CD4-positive, alpha-beta T cell (primary cell): ENCODE measurements at regions of chr12 and their contacts with region 1.

Region 1: DNA sequence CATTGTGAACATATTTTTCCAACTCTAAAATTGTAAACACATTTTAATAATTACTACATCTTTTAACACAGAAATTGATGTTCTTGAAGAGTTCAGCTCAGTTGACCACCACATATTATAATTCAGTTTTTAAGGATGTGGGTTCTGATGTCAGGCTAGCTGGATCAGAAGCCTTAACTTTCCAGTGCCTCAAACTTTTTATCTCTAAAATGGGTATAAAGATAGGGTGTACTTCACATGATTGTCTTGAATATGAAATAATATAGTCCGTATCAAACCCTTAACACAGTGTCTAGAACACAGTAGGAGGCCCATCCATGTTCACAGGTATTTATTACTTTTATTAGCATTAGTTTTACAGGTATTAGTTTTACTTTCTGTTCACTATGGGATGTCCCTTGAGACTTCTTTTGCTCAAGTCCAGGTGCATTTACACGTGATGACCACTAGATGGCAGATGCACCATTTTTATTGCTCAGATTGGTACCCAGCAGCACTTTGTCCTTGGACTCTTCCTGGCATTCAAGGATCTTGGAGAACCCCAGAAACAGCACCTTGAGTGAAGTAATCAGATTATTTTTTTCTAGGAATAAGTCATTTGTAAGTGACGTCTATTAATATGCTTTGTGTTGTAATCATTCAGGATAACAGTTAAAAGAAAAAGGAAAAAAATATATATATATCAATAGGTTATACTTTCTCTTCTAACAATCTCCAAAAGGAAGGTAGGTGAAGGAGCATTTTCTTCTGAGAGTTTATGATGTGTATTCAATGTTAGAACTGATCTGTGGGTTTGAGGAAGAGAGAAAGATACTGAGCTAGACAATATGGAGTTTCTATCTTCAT is 580.2 kb downstream of the ETNK1 start:
- DNase-seq: peak in 4 of 14 experiments; percentile 5 to 59 (median 51)
- ATAC-seq: no peak
- H3K4me3 ChIP-seq: no peak overlapping the region
- H3K4me3 Mint-ChIP-seq: no peak overlapping the region
- H3K27ac ChIP-seq: no peak overlapping the region
- H3K27ac Mint-ChIP-seq: no peak overlapping the region
- H3K4me1 ChIP-seq: no peaks in the 10 kb centered on the region
- H3K4me1 Mint-ChIP-seq: no peaks in the 10 kb centered on the region
- H3K27me3 ChIP-seq: no peaks in the 10 kb centered on the region
- H3K27me3 Mint-ChIP-seq: no peaks in the 10 kb centered on the region
- CTCF ChIP-seq: peak; percentile 96

Region 2: DNA sequence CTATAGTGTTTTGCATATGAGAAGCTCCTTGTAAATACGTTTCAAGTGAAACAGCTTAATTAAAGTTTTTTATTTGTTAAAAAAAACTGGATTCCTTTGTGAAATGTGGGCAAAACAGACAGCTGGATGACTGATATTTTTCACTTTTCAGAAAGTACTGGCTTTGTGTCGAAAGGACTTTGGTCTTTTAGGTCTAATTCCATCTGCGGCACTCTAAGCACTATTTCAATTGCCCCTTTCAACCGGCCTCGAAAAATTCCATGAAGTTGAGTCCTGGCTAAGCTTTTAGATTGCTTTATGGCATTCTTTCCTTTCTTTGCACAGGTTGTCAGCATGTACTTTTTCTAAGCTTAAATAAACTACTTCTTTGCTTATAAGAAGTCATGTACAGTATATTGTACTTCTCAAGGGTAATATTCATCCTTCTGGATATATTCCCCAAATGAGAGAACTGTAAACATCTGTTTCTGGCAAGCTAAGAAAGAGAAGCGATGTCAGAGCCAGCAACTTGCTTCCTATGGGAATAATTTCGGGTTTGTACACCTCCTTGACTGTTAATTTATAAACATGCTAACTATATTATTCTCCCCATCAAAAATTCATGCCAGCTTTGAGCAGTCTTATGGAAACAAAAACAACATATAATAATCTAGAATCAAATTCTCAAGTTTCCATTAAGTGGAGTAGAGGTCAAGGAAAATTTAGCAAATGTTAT is 31.1 kb after region 1 on chr12:
- CTCF ChIA-PET with region 1: no interaction called
- POLR2A ChIA-PET with region 1: no interaction called
- intact Hi-C with region 1: no loop called
- DNase-seq: no peak
- ATAC-seq: no peak
- H3K4me3 ChIP-seq: no peak overlapping the region
- H3K4me3 Mint-ChIP-seq: no peak overlapping the region
- H3K27ac ChIP-seq: no peak overlapping the region
- H3K27ac Mint-ChIP-seq: no peak overlapping the region
- H3K4me1 ChIP-seq: no peaks in the 10 kb centered on the region
- H3K4me1 Mint-ChIP-seq: no peaks in the 10 kb centered on the region
- H3K27me3 ChIP-seq: no peaks in the 10 kb centered on the region
- H3K27me3 Mint-ChIP-seq: no peaks in the 10 kb centered on the region
- CTCF ChIP-seq: no peak

Region 3: DNA sequence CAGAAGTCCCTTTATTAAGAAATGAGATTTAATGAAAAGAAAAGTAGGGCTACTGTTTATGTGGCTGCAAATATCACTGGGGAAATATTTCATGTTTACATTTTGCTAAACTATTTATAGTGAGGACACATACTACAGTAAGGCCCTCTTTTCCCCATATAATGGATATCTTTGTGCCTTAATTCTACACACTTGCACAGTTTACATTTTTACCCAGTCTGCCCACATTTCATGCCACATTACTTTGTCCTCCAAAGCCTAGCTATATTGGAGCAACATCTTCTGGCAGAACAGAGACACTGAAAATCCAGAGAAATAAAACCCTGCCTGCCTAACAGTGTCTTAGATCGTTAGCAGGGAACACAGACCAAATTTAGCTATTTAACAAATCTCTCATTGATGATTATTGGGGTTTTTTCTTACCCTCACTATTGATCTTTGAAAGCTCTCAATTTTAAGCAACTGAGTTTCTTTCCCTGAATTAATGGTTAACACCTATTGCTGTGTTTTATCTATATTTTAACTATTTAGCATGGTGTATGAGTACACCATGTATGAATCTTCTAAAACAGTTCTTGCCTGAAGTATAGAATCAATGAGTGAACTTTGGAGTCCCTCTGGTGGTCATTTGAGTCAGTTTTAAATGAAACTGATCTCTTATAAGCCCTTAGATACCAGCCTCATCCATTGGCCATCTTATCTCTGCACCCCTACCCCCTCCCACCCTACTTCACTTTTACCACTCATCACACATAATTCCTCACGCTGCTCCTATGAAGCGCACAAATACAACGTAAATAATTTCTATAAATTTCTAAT is 1573.5 kb after region 1 on chr12:
- CTCF ChIA-PET with region 1: no interaction called
- POLR2A ChIA-PET with region 1: no interaction called
- intact Hi-C with region 1: loop called in 1 of 2 experiments (anchors 2 kb)
- DNase-seq: peak in 3 of 14 experiments; percentile 14 to 24 (median 20)
- ATAC-seq: no peak
- H3K4me3 ChIP-seq: no peak overlapping the region
- H3K4me3 Mint-ChIP-seq: no peak overlapping the region
- H3K27ac ChIP-seq: no peak overlapping the region
- H3K27ac Mint-ChIP-seq: no peak overlapping the region
- H3K4me1 ChIP-seq: no peaks in the 10 kb centered on the region
- H3K4me1 Mint-ChIP-seq: no peaks in the 10 kb centered on the region
- H3K27me3 ChIP-seq: no peaks in the 10 kb centered on the region
- H3K27me3 Mint-ChIP-seq: peaks cover 10% of the 10 kb centered on the region
- CTCF ChIP-seq: no peak

Region 4: DNA sequence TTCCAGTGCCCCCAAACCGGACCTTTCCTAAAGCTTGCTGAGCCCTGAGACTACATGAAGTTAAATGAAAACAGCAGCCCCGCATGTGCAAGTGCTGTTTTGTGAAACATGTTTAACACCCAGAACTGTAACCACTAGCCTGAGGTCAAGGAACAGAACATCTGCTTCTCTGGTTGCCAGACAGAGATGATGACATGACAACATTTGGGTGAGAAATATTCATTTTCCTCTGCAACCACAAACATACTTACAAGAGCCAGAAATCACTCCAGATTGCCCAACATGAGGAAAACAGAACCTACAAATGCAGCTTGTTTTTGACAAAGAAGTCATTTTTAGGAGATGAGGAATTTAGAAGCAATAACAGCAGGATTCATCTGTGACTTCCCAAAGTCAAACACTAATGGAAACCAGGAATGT is 1633.4 kb after region 1 on chr12:
- CTCF ChIA-PET with region 1: no interaction called
- POLR2A ChIA-PET with region 1: no interaction called
- intact Hi-C with region 1: loop called (anchors 1 kb)
- DNase-seq: peak in 3 of 14 experiments; percentile 15 to 34 (median 18)
- ATAC-seq: no peak
- H3K4me3 ChIP-seq: no peak overlapping the region
- H3K4me3 Mint-ChIP-seq: no peak overlapping the region
- H3K27ac ChIP-seq: no peak overlapping the region
- H3K27ac Mint-ChIP-seq: no peak overlapping the region
- H3K4me1 ChIP-seq: no peaks in the 10 kb centered on the region
- H3K4me1 Mint-ChIP-seq: no peaks in the 10 kb centered on the region
- H3K27me3 ChIP-seq: no peaks in the 10 kb centered on the region
- H3K27me3 Mint-ChIP-seq: peaks cover 8% of the 10 kb centered on the region
- CTCF ChIP-seq: no peak